Activated CD4-positive, alpha-beta memory T cell treated with anti-CD3 and anti-CD28 coated beads, Interleukin-2, amount 10 ng/mL, durations not matched to agents 7 days and 5 days (primary cell): ENCODE measurements at regions of chr7 and their contacts with region 1.

Region 1: DNA sequence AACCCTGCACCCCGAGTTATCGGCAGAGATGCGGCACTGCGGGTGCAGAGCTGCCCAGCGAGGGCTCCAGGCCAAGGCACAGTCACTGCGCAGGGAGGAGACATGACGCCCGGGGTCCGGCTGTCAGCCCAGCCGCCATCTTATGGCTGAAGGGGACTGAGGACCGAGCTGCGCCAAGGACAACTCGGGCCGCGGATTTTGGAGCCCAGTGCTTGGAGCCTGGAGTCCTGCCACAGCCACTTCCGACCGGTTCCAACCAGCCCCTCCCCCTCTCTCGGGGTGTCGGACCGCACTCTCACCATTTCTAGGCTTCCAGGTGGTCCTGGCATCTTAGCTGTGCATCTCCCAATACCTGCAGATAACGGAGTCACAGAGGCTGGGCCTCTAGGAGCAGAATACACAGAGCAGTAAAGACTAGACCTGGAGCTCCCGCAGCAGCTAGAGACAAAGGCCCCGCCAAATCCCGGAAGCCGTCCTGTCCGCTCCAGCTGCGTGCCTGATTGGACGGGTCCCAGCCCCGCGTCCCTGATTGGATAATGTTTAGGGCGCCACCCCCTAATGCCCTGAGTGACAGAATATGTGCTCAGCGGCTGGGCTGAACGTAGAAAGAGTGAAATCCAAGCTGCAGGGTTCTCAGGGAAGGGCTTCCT is at the start of gene ZNF680:
- DNase-seq: peak; percentile 92
- H3K4me3 Mint-ChIP-seq: peak within 1 kb of the TSS; percentile 99
- H3K27ac Mint-ChIP-seq: peak within 1 kb of the TSS; percentile 94
- H3K4me1 Mint-ChIP-seq: peaks cover 20% of the 10 kb centered on the region
- H3K27me3 Mint-ChIP-seq: no peaks in the 10 kb centered on the region
- total RNA-seq, gene ZNF680: 12.8 to 13.0 TPM

Region 2: DNA sequence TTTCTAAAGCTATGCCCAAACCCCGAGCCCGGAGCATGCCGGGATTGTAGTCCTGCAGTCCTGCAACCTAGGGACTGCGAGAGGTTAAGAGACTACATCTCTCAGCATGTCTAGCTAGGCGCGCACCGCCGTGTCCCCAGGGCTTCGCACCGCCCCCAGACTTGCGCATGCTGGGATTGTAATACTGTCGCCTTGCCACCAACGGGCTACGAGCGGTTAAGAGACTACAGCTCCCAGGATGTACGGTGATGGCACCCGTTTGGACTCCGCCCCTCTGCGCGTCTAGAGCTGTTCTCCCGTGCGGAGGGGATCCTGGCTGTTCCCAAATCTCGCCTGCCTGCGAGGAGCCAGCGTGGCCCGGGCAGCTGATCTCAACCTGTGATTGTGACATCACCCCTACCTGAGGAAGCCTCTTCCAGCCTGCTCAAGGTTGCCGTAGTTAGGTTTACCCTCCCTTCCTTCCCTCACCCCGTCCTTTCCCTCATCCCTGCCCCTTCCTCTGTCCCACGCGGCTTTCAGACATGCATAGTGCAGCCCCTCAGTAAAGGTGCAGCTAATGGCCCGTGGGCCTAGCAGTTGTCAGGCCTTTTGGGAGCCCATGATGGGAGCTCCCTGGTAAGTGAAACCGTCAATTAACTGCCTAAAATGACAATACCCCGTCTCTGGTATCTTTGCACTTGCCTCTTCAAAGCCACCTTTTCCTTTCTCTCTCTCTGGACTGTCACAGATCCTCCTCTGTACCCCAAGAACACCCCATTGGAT is 255.3 kb before region 1 on chr7:
- CTCF ChIA-PET with region 1: interaction called, 6 read pairs
- POLR2A ChIA-PET with region 1: interaction called, 32 read pairs
- DNase-seq: peak; percentile 95
- H3K4me3 Mint-ChIP-seq: peak overlapping the region; percentile 93
- H3K27ac Mint-ChIP-seq: peak overlapping the region; percentile 85
- H3K4me1 Mint-ChIP-seq: peaks cover 19% of the 10 kb centered on the region
- H3K27me3 Mint-ChIP-seq: no peaks in the 10 kb centered on the region

Region 3: DNA sequence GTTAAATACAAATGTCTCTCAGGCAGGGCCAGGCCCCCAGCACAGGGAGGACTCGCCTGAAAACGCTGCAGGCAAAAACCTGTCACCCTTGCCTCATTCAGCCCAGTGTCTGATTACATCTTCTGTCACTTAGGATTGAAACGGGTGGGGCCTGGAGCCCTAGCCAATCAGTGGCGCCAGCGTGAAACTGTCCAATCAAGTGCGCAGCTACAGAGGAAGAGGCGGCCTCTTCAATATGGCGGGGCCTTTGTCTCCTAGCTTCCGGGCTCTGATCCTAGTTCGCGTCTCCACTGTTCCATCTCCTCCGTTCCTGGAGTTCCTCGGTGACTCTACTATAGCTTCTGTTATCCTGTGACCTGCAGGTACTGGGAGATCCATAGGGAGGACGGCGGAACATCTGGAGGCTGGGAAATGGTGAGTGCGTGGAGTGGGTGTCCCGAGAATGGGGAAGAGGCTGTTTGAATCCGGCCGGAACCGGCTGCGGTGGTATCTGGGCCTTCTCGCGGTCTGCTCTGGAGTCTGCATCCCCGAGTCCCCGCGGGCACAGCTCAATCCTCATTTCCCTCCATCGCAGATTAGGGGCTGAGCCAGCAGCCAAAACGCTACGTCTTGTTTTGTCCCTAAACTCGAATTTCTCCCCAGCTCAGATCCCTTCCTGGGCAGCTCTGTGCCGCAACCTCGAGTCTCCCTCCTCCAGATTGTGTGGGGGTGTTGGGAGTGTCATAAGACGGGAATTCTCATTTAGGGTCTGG is 248.8 kb before region 1 on chr7 and contains the start of gene ZNF736:
- CTCF ChIA-PET with region 1: no interaction called
- POLR2A ChIA-PET with region 1: interaction called, 32 read pairs
- DNase-seq: peak; percentile 91
- H3K4me3 Mint-ChIP-seq: peak within 1 kb of the TSS; percentile 97
- H3K27ac Mint-ChIP-seq: peak within 1 kb of the TSS; percentile 92
- H3K4me1 Mint-ChIP-seq: peaks cover 30% of the 10 kb centered on the region
- H3K27me3 Mint-ChIP-seq: no peaks in the 10 kb centered on the region
- total RNA-seq, gene ZNF736: 22.5 to 24.5 TPM

Region 4: DNA sequence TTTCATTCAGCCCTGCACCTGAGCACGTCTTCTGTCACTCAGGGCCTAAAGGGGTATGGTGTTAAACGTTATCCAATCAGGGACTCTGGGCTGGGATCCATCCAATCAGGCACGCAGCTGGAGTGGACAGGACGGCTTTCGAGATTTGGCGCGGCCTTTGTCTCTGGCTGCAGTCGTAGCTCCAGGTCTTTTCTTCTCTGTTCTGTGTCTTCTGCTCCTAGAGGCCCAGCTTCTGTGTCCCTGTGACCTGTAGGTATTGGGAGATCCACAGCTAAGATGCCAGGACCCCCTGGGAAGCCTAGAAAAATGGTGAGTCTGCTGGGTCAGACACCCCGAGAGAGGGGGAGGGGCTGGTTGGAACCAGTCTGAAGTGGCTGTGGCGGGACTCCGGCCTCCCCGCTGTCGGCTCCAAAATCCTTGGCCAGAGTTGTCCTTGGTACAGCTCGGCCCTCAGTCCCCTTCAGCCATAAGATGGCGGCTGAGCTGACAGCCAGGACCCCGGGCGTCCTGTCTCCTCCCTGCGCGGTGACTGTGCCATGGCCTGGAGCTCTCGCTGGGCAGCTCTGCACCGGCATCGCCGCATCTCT is 11.9 kb after region 1 on chr7:
- CTCF ChIA-PET with region 1: no interaction called
- POLR2A ChIA-PET with region 1: interaction called, 11 read pairs
- DNase-seq: no peak
- H3K4me3 Mint-ChIP-seq: no peak overlapping the region
- H3K27ac Mint-ChIP-seq: no peak overlapping the region
- H3K4me1 Mint-ChIP-seq: peaks cover 5% of the 10 kb centered on the region
- H3K27me3 Mint-ChIP-seq: peaks cover 5% of the 10 kb centered on the region

Region 5: DNA sequence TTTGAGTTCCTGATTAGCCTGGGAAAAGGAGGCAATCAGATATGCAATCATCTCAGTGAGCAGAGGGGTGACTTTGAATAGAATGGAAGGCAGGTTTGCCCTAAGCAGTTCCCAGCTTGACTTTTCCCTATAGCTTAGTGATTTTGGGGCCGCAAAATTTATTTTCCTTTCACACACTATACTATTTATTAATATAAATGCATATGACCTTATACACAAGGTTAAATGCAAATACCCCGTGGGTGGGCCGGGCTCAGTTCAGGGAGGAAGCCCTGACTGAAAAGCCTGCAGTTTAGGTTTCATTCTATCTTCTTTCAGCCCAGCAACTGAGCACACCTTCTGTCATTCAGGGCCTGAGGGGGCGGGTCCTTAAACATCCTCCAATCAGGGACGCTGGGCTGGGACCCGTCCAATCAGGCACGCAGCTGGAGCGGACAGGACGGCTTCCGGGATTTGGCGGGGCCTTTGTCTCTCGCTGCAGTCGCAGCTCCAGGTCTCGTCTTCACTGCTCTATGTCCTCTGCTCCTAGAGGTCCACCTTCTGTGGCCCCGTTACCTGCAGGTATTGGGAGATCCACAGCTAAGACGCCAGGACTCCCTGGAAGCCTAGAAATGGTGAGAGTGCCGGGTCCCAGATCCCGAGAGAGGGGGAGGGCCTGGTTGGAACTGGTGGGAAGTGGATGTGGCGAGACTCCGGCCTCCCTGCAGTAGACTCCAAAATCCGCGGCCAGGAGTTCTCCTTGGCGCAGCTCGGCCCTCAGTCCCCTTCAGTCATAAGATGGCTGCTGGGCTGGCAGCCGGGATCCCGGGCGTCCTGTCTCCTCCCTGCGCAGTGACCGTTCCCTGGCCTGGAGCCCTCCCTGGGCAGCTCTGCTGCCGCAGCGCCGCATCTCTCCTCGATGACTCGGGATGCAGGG is 340.3 kb after region 1 on chr7 and contains the start of gene ZNF273:
- CTCF ChIA-PET with region 1: no interaction called
- POLR2A ChIA-PET with region 1: interaction called, 13 read pairs
- DNase-seq: peak; percentile 94
- H3K4me3 Mint-ChIP-seq: peak within 1 kb of the TSS; percentile 94
- H3K27ac Mint-ChIP-seq: peak within 1 kb of the TSS; percentile 92
- H3K4me1 Mint-ChIP-seq: peaks cover 46% of the 10 kb centered on the region
- H3K27me3 Mint-ChIP-seq: no peaks in the 10 kb centered on the region
- total RNA-seq, gene ZNF273: 8.4 to 10.5 TPM